CD8-positive, alpha-beta T cell (primary cell): ENCODE measurements at regions of chr11 and their contacts with region 1.

Region 1: DNA sequence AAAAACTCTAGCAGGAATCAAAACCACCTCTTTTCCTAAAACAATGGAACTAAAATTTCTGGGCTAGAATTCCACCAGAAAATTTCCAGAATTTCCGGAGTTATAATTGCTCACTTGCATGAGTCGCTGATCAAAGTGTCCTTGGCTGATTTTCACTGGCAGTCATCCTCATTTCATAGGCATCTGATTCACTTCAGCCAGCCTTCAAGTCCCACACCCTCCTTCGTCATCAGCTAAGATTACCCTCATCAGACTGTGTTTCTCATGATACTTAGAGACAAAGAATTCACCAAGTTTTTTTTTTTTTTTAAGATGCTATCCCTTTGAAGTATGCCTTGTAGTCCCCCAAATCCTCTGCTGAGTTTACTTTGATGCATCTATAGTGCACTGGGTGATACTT is 71.5 kb upstream of the RAB38 start:
- DNase-seq: no peak
- ATAC-seq: no peak
- H3K4me3 ChIP-seq: no peak overlapping the region
- H3K4me3 Mint-ChIP-seq: no peak overlapping the region
- H3K27ac ChIP-seq: no peak overlapping the region
- H3K27ac Mint-ChIP-seq: no peak overlapping the region
- H3K4me1 ChIP-seq: no peaks in the 10 kb centered on the region
- H3K4me1 Mint-ChIP-seq: no peaks in the 10 kb centered on the region
- H3K27me3 ChIP-seq: no peaks in the 10 kb centered on the region
- H3K27me3 Mint-ChIP-seq: no peaks in the 10 kb centered on the region
- CTCF ChIP-seq: no peak

Region 2: DNA sequence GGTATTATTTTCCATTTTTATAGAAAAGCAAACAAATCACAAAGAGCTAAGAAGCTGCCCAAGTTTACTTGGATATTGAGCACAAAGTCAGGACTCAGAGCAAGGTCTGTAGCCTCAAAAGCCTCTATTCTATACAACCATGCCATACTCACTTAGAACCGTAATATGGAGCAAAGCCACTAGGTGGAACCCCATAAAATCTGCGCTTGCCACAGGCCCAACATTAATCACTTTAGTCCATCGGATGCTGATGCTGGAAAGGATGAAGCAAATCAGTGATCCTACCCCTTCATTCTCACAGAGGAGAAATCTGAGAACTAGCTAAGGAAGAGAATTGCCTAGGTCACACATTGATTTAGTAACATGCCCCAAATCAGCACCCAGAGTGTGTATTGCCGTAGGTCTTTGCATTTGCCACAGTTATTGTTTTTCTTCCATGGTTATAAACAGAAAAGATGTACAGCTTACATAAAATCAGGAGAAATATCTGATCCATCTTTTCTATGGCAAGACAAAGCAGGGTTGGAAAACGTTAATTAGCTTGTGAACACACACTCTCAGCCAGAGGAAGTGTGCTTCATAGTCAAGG is 14.7 kb before region 1 on chr11:
- CTCF ChIA-PET with region 1: interaction called, 10 read pairs
- POLR2A ChIA-PET with region 1: no interaction called
- intact Hi-C with region 1: no loop called
- DNase-seq: peak in 2 of 9 experiments; percentile 38 to 51
- ATAC-seq: peak; percentile 40
- H3K4me3 ChIP-seq: no peak overlapping the region
- H3K4me3 Mint-ChIP-seq: no peak overlapping the region
- H3K27ac ChIP-seq: no peak overlapping the region
- H3K27ac Mint-ChIP-seq: no peak overlapping the region
- H3K4me1 ChIP-seq: no peaks in the 10 kb centered on the region
- H3K4me1 Mint-ChIP-seq: no peaks in the 10 kb centered on the region
- H3K27me3 ChIP-seq: no peaks in the 10 kb centered on the region
- H3K27me3 Mint-ChIP-seq: no peaks in the 10 kb centered on the region
- CTCF ChIP-seq: peak; percentile 50